T-cell (primary cell): ENCODE measurements at regions of chrX and their contacts with region 1.

Region 1: GRCh38 chrX:120308959-120309872 is 2.0 kb downstream of the TMEM255A start:
- DNase-seq: peak; percentile 33 to 82 (median 63)
- ATAC-seq: peak; percentile 90 to 95 (median 93)
- H3K4me3 ChIP-seq: peak overlapping the region; percentile 52 to 58
- H3K4me3 Mint-ChIP-seq: peak overlapping the region; percentile 78 to 80 (median 78)
- H3K27ac ChIP-seq: no peak overlapping the region
- H3K27ac Mint-ChIP-seq: peak overlapping the region; percentile 72 to 79
- H3K4me1 ChIP-seq: peaks cover 0 to 37% of the 10 kb centered on the region in 2 experiments
- H3K4me1 Mint-ChIP-seq: peaks cover 10 to 33% (median 20%) of the 10 kb centered on the region in 3 donors
- H3K27me3 ChIP-seq: peaks cover 3 to 30% of the 10 kb centered on the region in 2 experiments
- H3K27me3 Mint-ChIP-seq: peaks cover 31 to 54% of the 10 kb centered on the region in 2 donors

Region 2: GRCh38 chrX:120321520-120322281 is 12.5 kb after region 1 on chrX:
- CTCF ChIA-PET with region 1: interaction called in 1 of 2 experiments, 11 read pairs
- POLR2A ChIA-PET with region 1: no interaction called
- DNase-seq: no peak
- ATAC-seq: no peak
- H3K4me3 ChIP-seq: no peak overlapping the region
- H3K4me3 Mint-ChIP-seq: no peak overlapping the region
- H3K27ac ChIP-seq: no peak overlapping the region
- H3K27ac Mint-ChIP-seq: no peak overlapping the region
- H3K4me1 ChIP-seq: no peaks in the 10 kb centered on the region
- H3K4me1 Mint-ChIP-seq: no peaks in the 10 kb centered on the region
- H3K27me3 ChIP-seq: peaks cover 0 to 4% of the 10 kb centered on the region in 2 experiments
- H3K27me3 Mint-ChIP-seq: peaks cover 2 to 38% of the 10 kb centered on the region in 2 donors

Region 3: DNA sequence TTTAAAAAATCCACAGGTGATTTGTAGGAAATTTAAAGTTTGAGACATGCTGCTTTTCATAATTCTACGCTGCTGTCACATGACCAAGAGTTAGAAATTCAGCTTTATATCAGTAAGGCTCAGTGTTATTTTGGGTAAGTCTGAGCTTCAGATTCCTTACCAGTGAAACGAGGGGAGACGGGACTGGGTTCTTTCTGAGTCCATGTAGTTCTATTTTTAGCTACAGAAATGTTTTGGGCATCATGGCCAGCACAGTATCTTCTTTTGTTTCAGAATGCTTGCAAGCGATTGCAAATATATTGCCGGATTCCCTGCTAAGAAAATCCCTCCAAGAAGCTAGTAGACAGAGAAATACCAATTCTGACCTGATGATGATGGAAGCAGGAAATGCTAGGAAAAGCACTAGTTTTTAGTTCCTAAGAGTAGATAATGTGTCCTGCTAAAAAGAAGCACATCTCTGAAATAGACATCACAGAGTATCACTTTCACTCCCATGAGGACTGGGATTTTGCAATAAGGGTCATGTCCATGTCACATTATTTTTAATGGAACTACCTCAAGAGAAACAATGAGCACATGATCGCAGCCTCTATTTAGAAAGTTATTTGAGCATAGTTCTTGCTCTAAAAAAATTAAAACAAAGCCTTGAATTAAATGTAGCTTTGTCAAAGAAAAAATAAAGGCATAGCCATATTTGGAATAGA is 63.6 kb after region 1 on chrX:
- CTCF ChIA-PET with region 1: no interaction called
- POLR2A ChIA-PET with region 1: no interaction called
- DNase-seq: no peak
- ATAC-seq: no peak
- H3K4me3 ChIP-seq: no peak overlapping the region
- H3K4me3 Mint-ChIP-seq: no peak overlapping the region
- H3K27ac ChIP-seq: no peak overlapping the region
- H3K27ac Mint-ChIP-seq: no peak overlapping the region
- H3K4me1 ChIP-seq: no peaks in the 10 kb centered on the region
- H3K4me1 Mint-ChIP-seq: no peaks in the 10 kb centered on the region
- H3K27me3 ChIP-seq: peaks cover 0 to 4% of the 10 kb centered on the region in 2 experiments
- H3K27me3 Mint-ChIP-seq: peaks cover 0 to 12% of the 10 kb centered on the region in 2 donors